ENCODE measurements at regions of chr18 and their contacts with region 1.

Region 1: DNA sequence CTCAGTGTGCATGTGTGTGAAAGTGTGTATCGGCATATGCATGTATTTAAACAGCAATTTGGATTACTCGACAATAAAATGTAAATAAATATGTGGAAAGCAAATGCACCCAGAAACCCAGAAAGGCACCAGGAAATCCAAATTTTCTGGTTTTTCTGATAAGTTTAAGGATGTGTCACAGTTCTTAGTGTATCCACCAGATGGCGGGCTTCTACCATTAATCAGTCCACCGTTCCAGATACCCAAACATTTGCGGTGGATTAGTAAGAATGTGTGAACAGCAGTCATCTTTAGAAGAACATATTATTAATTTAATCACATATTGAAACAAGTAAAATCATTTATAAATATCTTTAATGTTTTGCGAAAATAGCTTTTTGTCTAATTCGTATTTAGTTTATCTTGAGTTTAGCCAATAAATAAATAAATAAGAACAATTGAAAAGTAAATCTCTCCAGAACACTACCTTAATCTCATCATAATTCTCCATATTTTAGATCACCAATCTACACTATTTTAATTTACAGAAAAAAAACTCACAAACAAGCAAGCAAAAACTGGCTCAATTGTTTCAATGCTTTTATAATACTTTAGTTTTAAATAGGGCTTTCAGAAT is 298.9 kb downstream of the DSEL start:
- DNase-seq: peak in 39 of 42 donors; percentile 8 to 89 (median 68)

Region 2: DNA sequence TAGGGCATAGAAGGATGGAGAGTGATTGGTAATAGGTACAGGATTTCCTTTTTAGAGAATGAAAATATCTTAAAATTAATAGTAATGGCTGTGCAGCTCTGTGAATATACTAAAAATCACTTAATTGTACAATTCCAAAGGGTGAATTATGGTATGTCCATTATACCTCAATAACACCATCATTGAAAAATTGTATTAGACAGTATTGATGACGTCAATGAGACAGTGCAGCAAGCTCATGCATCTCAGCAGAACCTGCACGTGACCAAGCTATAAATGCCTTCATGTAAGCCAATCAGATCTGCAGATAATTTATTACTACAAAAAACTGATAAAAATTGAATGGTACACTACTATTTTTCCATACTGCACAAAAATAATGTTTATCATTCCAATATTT is 259.4 kb before region 1 on chr18:
- intact Hi-C with region 1: no loop called
- DNase-seq: no peak

Region 3: DNA sequence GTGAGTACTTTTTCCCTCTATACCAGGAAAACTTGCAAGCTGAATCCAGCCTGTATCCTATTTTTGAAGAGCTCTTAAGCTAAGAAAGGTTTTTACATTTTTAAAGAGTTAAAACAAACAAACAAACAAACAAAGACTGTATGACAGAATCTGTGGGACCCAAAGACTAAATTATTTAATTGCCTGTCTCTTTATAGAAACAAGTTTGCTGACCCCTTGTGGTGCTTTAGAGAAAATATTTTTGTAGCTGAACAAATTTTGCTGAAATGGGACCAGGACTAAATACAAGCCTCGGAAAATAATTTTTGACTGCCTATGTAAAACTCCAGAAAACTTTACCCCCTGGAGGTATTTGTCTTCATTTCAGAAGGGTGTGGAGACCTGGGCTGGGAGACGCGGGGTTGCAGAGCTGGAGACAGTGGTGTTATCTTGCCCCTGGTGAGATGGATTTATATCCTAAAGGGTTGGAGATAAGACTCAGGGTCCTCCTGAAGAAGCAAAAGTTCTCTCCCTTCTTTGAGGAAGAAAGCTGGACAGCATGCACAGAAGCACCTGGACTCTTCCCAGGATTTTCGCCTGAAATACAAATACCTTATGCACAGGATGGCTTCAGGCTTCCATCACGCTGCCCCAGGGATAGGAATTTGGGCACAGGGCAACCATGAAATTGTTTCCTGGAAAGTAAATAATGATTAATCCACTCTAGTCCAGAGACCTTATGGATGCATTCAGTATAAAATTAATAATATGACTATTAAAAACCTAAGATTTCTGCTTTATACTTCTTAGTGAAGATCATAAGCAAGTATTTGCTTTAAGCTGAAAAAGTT is 1442.9 kb after region 1 on chr18:
- intact Hi-C with region 1: loop called (anchors 10 kb)
- DNase-seq: peak in 3 of 42 donors; percentile 13 to 36 (median 19)

Region 4: DNA sequence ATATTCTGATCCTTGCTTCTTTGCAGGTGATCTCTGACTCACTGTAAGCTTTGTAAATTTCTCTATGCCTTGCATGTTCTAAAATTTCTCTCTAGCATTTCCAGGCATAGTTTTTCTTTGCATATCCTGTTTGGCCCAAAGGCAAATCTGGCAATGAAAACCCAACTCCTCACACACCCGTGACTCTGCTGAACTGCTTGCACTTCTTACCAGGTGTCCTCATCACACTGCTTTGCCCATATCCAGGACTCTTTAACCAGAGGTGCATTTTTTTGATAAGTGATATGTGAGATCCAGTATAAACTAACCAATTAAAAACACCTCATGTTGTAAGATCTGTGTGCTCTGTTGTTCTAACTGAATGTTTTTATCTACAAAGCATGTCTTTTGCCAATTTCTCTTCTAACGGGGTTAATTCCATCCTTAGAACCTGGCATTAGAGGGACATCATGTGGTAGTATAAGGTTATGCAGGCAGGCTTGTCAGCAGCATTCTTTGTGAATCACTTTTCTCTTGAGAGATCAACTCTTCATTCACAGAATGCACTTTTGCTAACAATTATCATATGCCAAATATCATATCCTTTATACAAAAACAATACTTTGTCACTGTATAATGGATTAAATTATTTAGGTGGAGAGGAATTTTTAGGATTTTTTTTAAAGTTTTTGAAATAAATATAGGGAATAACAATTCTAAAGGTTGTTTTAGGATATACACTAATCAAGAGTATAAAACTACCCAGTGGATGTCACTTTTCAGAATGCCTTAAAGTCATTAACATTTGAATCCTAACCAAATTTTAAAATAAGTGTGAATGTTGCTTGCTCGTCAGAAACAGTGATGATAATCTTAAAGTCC is 1518.1 kb after region 1 on chr18:
- intact Hi-C with region 1: loop called (anchors 10 kb)
- DNase-seq: peak in 4 of 42 donors; percentile 17 to 53 (median 46)